ENCODE measurements at regions of chr4 and their contacts with region 1.

Region 1: GRCh38 chr4:168551945-168552695 is 55.3 kb downstream of the PALLD start:
- DNase-seq: no peak
- H3K4me3 Mint-ChIP-seq: no peak overlapping the region
- H3K27ac Mint-ChIP-seq: no peak overlapping the region
- H3K4me1 Mint-ChIP-seq: no peaks in the 10 kb centered on the region
- H3K27me3 Mint-ChIP-seq: peaks cover 4% of the 10 kb centered on the region

Region 2: GRCh38 chr4:168183717-168184608 is 368.2 kb before region 1 on chr4:
- CTCF ChIA-PET with region 1: no interaction called
- POLR2A ChIA-PET with region 1: no interaction called
- intact Hi-C with region 1: loop called (anchors 10 kb)
- DNase-seq: no peak
- H3K4me3 Mint-ChIP-seq: no peak overlapping the region
- H3K27ac Mint-ChIP-seq: no peak overlapping the region
- H3K4me1 Mint-ChIP-seq: no peaks in the 10 kb centered on the region
- H3K27me3 Mint-ChIP-seq: no peaks in the 10 kb centered on the region

Region 3: GRCh38 chr4:168540086-168540865 is 11.8 kb before region 1 on chr4:
- CTCF ChIA-PET with region 1: no interaction called
- POLR2A ChIA-PET with region 1: no interaction called
- intact Hi-C with region 1: loop called (anchors 1 kb)
- DNase-seq: peak; percentile 30
- H3K4me3 Mint-ChIP-seq: no peak overlapping the region
- H3K27ac Mint-ChIP-seq: peak overlapping the region; percentile 26
- H3K4me1 Mint-ChIP-seq: peaks cover 6% of the 10 kb centered on the region
- H3K27me3 Mint-ChIP-seq: peaks cover 2% of the 10 kb centered on the region

Region 4: GRCh38 chr4:169659716-169660670 is 1107.9 kb after region 1 on chr4:
- CTCF ChIA-PET with region 1: no interaction called
- POLR2A ChIA-PET with region 1: no interaction called
- intact Hi-C with region 1: no loop called
- DNase-seq: peak; percentile 80
- H3K4me3 Mint-ChIP-seq: peak overlapping the region; percentile 68
- H3K27ac Mint-ChIP-seq: peak overlapping the region; percentile 91
- H3K4me1 Mint-ChIP-seq: peaks cover 22% of the 10 kb centered on the region
- H3K27me3 Mint-ChIP-seq: no peaks in the 10 kb centered on the region